Psoas muscle (tissue), 8 donors: ENCODE measurements at regions of chr9 and their contacts with region 1.

Region 1: DNA sequence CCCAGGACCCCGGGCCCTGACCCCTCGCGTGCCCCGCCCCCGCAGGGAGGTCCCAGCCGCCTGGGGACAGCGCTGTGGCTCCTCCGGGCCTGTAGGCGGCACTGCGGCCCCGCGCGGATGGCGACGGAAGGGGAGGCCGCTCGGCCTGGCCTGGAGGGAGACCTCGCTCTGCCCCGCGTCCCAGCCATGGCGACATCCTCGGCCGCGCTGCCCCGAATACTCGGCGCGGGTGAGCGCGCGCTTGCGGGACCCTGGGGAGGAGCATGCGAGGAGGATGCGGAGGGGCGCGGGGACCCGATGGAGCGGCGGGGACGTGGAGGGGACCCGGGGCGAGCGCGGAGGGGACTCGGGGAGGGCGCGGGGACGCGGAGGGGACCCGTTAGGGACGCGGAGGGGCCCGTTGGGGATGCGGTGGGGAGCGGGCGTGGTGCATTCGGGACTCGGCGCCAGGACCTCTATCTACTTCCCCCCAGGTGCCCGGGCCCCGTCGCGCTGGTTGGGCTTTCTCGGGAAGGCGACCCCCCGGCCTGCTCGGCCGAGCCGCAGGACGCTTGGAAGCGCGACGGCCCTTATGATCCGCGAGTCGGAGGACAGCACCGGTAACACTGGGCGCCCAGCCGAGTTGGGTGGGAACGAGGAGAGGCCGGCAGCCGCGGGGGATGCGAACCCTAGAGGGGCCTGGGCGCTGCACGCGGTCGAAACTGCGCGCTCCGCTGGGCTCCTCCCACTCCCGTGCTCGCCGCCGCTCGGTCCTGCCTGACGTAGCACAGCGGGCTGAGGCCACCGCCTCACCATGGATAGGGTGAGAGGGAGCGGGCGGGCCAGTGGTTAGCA is at the start of gene MRPS2:
- DNase-seq: peak; percentile 90 to 92
- ATAC-seq: peak; percentile 96 to 98 (median 98)
- H3K4me3 ChIP-seq: peak within 1 kb of the TSS; percentile 86
- H3K27ac ChIP-seq: peak within 1 kb of the TSS; percentile 65
- H3K4me1 ChIP-seq: peaks cover 10% of the 10 kb centered on the region
- H3K27me3 ChIP-seq: no peaks in the 10 kb centered on the region
- CTCF ChIP-seq: peak; percentile 81
- total RNA-seq, gene MRPS2: 36.8 to 47.1 (median 41.5) TPM

Region 2: GRCh38 chr9:134306636-134307600 is 1193.8 kb before region 1 on chr9:
- intact Hi-C with region 1: loop called in 1 of 2 experiments (anchors 5 kb)
- DNase-seq: peak; percentile 13 to 60
- ATAC-seq: peak in 2 of 4 donors; percentile 21 to 39
- H3K4me3 ChIP-seq: no peak overlapping the region
- H3K27ac ChIP-seq: no peak overlapping the region
- H3K4me1 ChIP-seq: no peaks in the 10 kb centered on the region
- H3K27me3 ChIP-seq: no peaks in the 10 kb centered on the region
- CTCF ChIP-seq: no peak

Region 3: GRCh38 chr9:135524130-135524861 is 23.6 kb after region 1 on chr9:
- intact Hi-C with region 1: no loop called
- DNase-seq: no peak
- ATAC-seq: no peak
- H3K4me3 ChIP-seq: no peak overlapping the region
- H3K27ac ChIP-seq: no peak overlapping the region
- H3K4me1 ChIP-seq: no peaks in the 10 kb centered on the region
- H3K27me3 ChIP-seq: peaks cover 0 to 26% (median 7%) of the 10 kb centered on the region in 3 donors
- CTCF ChIP-seq: no peak